ENCODE measurements at regions of chr4 and their contacts with region 1.

Region 1: DNA sequence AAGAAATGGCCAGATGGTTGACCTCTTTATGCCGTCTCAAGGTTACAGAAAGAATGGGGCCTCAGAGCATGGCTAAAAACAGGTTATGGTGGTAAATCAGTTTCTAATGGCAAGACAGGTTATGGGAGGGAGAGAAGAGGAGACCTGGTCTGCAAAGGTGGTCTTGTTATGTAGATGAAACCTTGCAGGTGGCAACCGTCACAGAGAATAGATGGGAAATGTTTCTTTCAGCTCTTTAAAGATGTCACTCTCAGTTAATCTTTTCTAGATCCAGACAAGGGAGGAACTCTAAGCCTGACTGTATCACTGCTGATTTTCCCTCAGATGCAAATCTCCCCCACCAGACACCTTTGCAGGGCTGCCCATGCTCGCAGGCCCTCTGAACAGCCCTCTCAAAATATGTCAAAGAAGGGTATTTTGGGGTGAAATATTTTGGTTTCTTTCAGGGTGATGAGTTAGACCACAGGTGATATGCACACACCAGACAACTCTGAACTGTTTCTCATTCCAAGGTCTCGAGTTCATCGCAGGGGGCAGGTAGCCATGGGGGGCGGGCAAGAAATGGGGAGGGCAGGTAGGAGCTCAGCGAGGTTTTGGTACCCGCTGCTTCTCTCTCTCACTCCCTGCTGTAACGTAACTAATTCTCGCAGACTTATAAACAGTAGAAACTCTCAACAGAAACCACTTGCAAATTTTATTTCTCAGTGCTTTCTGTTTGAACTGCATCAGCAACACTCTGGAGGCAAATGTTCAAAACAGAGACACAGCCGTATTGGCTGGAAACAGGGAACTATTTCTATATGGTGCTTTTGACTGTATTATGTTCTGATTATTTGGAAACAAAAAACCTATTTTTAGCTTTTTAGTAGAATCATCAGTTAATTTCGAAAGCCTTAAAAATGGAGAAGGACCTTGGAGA is 32.4 kb downstream of the CASP3 start:
- DNase-seq: no peak
- ATAC-seq: no peak
- H3K4me3 ChIP-seq: no peak overlapping the region
- H3K27ac ChIP-seq: no peak overlapping the region
- H3K4me1 ChIP-seq: no peaks in the 10 kb centered on the region
- H3K27me3 ChIP-seq: no peaks in the 10 kb centered on the region
- CTCF ChIP-seq: no peak

Region 2: GRCh38 chr4:184553896-184554295 is 63.0 kb before region 1 on chr4:
- CTCF ChIA-PET with region 1: no interaction called
- POLR2A ChIA-PET with region 1: no interaction called
- in situ Hi-C with region 1: no loop called
- intact Hi-C with region 1: loop called (anchors 10 kb)
- DNase-seq: no peak
- ATAC-seq: no peak
- H3K4me3 ChIP-seq: no peak overlapping the region
- H3K27ac ChIP-seq: no peak overlapping the region
- H3K4me1 ChIP-seq: no peaks in the 10 kb centered on the region
- H3K27me3 ChIP-seq: no peaks in the 10 kb centered on the region
- CTCF ChIP-seq: no peak

Region 3: GRCh38 chr4:184641022-184641421 is 24.1 kb after region 1 on chr4:
- CTCF ChIA-PET with region 1: no interaction called
- POLR2A ChIA-PET with region 1: no interaction called
- in situ Hi-C with region 1: no loop called
- intact Hi-C with region 1: no loop called
- DNase-seq: no peak
- ATAC-seq: no peak
- H3K4me3 ChIP-seq: no peak overlapping the region
- H3K27ac ChIP-seq: no peak overlapping the region
- H3K4me1 ChIP-seq: no peaks in the 10 kb centered on the region
- H3K27me3 ChIP-seq: no peaks in the 10 kb centered on the region
- CTCF ChIP-seq: no peak

Region 4: DNA sequence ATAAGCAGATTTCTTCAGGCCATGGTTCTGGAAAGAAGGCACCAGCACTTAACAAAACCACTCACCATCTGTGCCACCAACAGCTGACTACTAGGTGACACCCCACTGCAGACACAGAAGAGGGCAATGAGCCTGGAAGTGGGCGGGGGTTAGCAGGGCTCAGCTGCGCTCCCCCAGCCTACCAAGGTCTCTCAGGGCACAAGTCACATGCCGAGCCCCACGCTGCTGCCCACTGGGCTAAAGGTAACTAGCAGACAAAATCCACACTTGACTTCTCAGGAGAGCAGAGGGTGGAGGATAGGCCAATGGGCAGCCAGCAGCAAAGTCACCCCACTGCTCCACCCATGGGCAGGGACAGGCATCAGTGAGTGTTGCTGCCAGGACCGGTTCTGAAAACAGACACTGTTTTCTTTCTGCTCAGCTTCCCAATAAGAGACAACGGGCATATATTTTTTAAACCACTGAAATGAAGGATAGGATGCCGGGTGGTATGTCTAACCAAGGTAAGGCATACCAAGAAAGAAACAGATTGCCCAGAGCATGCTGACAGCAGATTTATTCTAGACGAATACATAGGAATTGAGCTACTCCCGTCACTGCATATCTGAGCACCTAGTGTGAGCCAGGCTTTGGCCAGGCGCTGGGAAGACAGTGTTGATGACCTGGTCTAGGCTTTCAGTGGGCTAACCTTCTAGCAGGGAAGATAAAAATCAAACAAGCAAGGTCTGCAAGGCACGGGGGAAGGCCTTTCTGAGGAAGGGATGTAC is 188.8 kb after region 1 on chr4:
- CTCF ChIA-PET with region 1: no interaction called
- POLR2A ChIA-PET with region 1: no interaction called
- in situ Hi-C with region 1: no loop called
- intact Hi-C with region 1: no loop called
- DNase-seq: no peak
- ATAC-seq: no peak
- H3K4me3 ChIP-seq: no peak overlapping the region
- H3K27ac ChIP-seq: no peak overlapping the region
- H3K4me1 ChIP-seq: peaks cover 8% of the 10 kb centered on the region; the same call in 1 of the 2 replicates
- H3K27me3 ChIP-seq: no peaks in the 10 kb centered on the region
- CTCF ChIP-seq: no peak